ENCODE measurements at regions of chr4 and their contacts with region 1.

Region 1: DNA sequence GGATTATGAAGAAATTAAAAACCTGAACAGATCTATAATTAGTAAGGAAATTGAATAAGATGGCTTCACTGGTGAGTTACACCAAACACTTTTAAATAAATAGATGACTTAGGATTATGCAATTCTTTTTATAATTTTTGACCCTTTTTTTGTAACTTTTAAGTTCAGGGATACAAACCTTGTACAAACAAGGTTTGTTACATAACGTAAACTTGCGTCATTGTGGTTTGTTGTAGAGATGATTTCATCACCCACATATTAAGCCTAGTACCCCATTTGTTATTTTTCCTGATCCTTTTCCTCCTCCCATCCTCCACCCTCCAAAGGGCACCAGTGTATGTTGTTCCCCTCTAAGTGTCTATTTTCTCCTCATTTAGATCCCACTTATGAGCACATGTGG is 75.7 kb downstream of the CPEB2 start:
- DNase-seq: no peak
- H3K4me3 ChIP-seq: no peak overlapping the region
- H3K27ac ChIP-seq: no peak overlapping the region
- H3K4me1 ChIP-seq: no peaks in the 10 kb centered on the region
- H3K27me3 ChIP-seq: no peaks in the 10 kb centered on the region
- CTCF ChIP-seq: no peak

Region 2: GRCh38 chr4:14375816-14376215 is 702.2 kb before region 1 on chr4:
- intact Hi-C with region 1: loop called (anchors 5 kb)
- DNase-seq: no peak
- H3K4me3 ChIP-seq: no peak overlapping the region
- H3K27ac ChIP-seq: no peak overlapping the region
- H3K4me1 ChIP-seq: no peaks in the 10 kb centered on the region
- H3K27me3 ChIP-seq: no peaks in the 10 kb centered on the region
- CTCF ChIP-seq: no peak

Region 3: DNA sequence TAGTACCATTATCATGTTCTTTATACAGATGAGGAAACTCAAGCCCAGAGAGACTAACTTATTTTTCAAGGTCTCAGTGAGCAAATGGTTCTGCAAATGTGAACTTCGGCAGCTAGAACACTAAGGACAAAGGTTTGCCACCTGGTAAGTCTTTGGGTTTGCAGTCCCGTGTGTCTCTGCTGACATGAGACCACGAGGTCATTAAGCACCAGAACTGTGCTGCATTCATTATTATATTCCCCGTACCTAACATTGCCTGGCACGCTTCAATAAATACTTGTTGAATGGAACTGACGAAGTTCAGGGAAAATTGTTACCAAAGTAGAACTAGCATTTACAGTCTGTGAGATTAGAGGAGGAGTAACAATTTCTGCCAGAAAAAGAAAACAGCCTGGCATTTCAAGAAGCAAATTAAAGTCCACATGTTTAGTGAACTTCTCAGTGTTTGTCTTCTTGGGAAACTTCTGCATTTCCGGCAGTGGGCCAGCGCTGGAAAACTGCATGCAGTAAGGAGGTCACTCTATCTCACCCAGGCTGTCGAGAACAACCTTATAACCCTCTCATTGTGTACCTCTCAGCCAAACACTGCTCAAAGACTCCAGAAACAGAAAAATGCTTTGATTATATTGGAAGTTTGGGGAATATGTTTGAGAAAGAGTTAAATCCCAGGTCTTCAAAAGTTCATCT is 143.1 kb before region 1 on chr4:
- intact Hi-C with region 1: no loop called
- DNase-seq: no peak
- H3K4me3 ChIP-seq: no peak overlapping the region
- H3K27ac ChIP-seq: no peak overlapping the region
- H3K4me1 ChIP-seq: no peaks in the 10 kb centered on the region
- H3K27me3 ChIP-seq: no peaks in the 10 kb centered on the region
- CTCF ChIP-seq: no peak

Region 4: DNA sequence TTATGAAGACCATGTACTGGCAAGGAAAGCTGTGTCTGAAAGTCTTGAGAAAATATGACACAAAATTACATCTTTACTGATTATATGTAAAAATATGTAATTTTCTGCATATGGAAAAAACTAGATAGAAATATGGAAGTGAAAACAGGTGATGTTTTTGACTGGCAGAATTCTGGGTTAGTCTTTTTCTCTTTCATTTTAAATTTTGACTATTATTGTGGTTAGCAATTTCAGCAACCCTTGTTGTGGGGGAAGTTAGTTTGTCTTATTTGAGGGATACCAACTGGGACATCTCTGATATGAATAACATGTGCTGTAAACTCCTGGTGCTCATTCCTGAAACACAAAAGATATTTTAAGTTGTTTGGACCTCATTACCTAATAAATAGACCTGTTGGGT is 125.6 kb before region 1 on chr4:
- intact Hi-C with region 1: no loop called
- DNase-seq: no peak
- H3K4me3 ChIP-seq: no peak overlapping the region
- H3K27ac ChIP-seq: no peak overlapping the region
- H3K4me1 ChIP-seq: no peaks in the 10 kb centered on the region
- H3K27me3 ChIP-seq: no peaks in the 10 kb centered on the region
- CTCF ChIP-seq: no peak